PC-9 (cell line): ENCODE measurements at regions of chr21 and their contacts with region 1.

Region 1: DNA sequence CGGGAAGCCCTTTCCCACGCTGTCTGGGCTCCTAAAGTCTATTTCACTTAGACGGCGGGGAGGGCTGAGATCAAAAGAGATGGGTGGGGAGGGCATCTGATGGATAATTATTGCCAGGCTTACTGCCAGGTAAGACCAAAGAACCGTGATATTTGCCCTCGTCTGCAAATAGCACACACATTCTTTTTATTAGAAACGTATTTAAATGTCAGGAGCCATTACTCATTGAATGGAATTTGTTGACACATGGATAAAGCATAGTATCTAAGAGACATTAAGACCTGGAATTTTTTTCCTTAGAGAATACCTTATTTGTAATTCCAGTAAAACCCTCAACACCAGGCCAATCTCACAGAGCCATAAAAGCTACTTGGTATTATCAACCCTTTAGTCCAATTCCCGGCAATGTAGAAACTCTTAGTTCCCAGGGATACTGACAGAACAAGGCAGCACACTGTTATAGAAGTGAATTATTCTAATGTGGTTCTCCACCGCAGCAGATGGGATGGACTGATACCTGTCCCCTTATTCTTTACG is 10.6 kb downstream of the URB1 start:
- DNase-seq: no peak
- H3K4me3 ChIP-seq: no peak overlapping the region
- H3K27ac ChIP-seq: no peak overlapping the region
- H3K4me1 ChIP-seq: no peaks in the 10 kb centered on the region
- H3K27me3 ChIP-seq: no peaks in the 10 kb centered on the region
- CTCF ChIP-seq: no peak

Region 2: DNA sequence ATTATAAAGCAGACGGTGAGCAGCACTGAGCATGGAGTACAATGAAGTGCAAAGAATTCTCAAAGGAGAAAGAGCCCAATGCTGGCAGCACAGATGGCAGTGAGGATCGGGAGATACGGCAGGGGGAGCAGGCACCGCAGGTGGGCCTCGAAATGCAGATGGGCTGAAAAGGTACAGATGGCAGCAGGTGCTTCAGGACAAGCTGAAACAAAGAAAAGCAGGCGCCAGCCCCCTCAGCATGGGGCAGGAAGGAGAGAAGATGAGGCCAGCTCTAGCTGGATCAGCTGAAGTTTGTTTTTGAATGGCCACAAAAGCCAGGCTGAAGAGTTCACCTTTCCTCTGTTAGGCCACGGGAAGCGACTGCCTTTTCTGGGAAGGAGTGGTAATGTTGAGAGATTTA is 222.3 kb after region 1 on chr21:
- CTCF ChIA-PET with region 1: no interaction called
- POLR2A ChIA-PET with region 1: interaction called, 17 read pairs
- intact Hi-C with region 1: no loop called
- DNase-seq: no peak
- H3K4me3 ChIP-seq: no peak overlapping the region
- H3K27ac ChIP-seq: no peak overlapping the region
- H3K4me1 ChIP-seq: no peaks in the 10 kb centered on the region
- H3K27me3 ChIP-seq: no peaks in the 10 kb centered on the region
- CTCF ChIP-seq: no peak

Region 3: GRCh38 chr21:32735524-32735923 is 353.3 kb after region 1 on chr21:
- CTCF ChIA-PET with region 1: no interaction called
- POLR2A ChIA-PET with region 1: interaction called, 14 read pairs
- intact Hi-C with region 1: no loop called
- DNase-seq: no peak
- H3K4me3 ChIP-seq: no peak overlapping the region
- H3K27ac ChIP-seq: no peak overlapping the region
- H3K4me1 ChIP-seq: no peaks in the 10 kb centered on the region; the same call in 1 of the 2 replicates
- H3K27me3 ChIP-seq: no peaks in the 10 kb centered on the region
- CTCF ChIP-seq: no peak